CD8-positive, alpha-beta T cell (primary cell): ENCODE measurements at regions of chr1 and their contacts with region 1.

Region 1: GRCh38 chr1:99996951-99997350 is 27.2 kb downstream of the SLC35A3 start:
- DNase-seq: no peak
- ATAC-seq: no peak
- H3K4me3 ChIP-seq: no peak overlapping the region
- H3K4me3 Mint-ChIP-seq: no peak overlapping the region
- H3K27ac ChIP-seq: no peak overlapping the region
- H3K27ac Mint-ChIP-seq: no peak overlapping the region
- H3K4me1 ChIP-seq: no peaks in the 10 kb centered on the region
- H3K4me1 Mint-ChIP-seq: peaks cover 11% of the 10 kb centered on the region
- H3K27me3 ChIP-seq: no peaks in the 10 kb centered on the region
- H3K27me3 Mint-ChIP-seq: no peaks in the 10 kb centered on the region
- CTCF ChIP-seq: no peak

Region 2: DNA sequence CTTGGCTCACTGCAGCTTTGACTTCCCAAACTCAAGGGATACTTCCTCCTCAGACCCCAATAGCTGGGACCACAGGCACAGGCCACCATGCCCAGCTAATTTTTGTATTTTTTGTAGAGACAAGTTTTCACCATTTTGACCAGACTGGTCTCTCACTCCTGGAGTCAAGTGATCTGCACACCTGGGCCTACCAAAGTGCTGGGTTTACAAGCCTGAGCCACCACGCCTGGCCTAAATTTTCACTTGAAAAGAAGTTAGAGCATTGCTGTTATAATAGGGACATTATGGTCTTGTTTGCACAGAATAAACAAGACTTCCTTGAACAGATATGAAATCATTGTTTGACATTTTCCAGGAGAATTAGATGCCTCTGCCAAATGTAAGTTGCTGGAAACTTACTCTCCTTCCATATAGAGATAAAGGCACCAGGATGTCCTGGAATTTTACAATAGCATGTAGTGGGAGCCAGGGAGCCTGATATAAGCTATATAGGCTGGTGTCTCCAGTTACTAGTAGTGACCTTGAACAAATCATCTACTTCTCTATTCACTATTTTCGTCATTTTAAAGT is 10.2 kb before region 1 on chr1:
- CTCF ChIA-PET with region 1: no interaction called
- POLR2A ChIA-PET with region 1: no interaction called
- intact Hi-C with region 1: loop called in 1 of 2 experiments (anchors 1 kb)
- DNase-seq: no peak
- ATAC-seq: no peak
- H3K4me3 ChIP-seq: no peak overlapping the region
- H3K4me3 Mint-ChIP-seq: no peak overlapping the region
- H3K27ac ChIP-seq: no peak overlapping the region
- H3K27ac Mint-ChIP-seq: no peak overlapping the region
- H3K4me1 ChIP-seq: no peaks in the 10 kb centered on the region
- H3K4me1 Mint-ChIP-seq: peaks cover 19% of the 10 kb centered on the region
- H3K27me3 ChIP-seq: no peaks in the 10 kb centered on the region
- H3K27me3 Mint-ChIP-seq: no peaks in the 10 kb centered on the region
- CTCF ChIP-seq: no peak

Region 3: GRCh38 chr1:100037927-100038659 is 41.1 kb after region 1 on chr1:
- CTCF ChIA-PET with region 1: no interaction called
- POLR2A ChIA-PET with region 1: no interaction called
- intact Hi-C with region 1: no loop called
- DNase-seq: peak; percentile 77 to 95 (median 87)
- ATAC-seq: peak; percentile 78
- H3K4me3 ChIP-seq: peak overlapping the region; percentile 85 to 94
- H3K4me3 Mint-ChIP-seq: peak overlapping the region; percentile 97
- H3K27ac ChIP-seq: peak overlapping the region; percentile 94 to 99
- H3K27ac Mint-ChIP-seq: peak overlapping the region; percentile 98
- H3K4me1 ChIP-seq: peaks cover 43% of the 10 kb centered on the region
- H3K4me1 Mint-ChIP-seq: peaks cover 52% of the 10 kb centered on the region
- H3K27me3 ChIP-seq: no peaks in the 10 kb centered on the region
- H3K27me3 Mint-ChIP-seq: no peaks in the 10 kb centered on the region
- CTCF ChIP-seq: no peak

Region 4: DNA sequence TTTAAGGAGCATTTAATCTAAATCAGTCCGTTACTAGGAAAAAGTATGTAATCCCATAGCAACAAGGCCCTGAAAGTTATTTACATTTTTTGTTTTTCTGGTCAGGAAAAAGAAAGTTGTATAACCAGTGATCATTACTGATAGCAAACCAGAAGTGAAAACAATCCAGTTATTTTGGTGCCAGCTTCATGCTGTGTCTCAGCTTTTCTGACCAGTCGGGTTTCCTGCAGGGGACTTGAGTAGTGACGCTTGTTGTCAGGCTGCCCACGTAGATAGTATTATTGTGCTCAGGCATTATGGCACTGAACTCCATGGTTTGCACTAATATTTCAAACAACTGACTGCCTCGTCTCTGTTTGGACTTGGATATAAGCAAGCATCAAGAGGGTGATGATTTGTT is 80.6 kb after region 1 on chr1:
- CTCF ChIA-PET with region 1: no interaction called
- POLR2A ChIA-PET with region 1: no interaction called
- intact Hi-C with region 1: no loop called
- DNase-seq: no peak
- ATAC-seq: no peak
- H3K4me3 ChIP-seq: no peak overlapping the region
- H3K4me3 Mint-ChIP-seq: no peak overlapping the region
- H3K27ac ChIP-seq: no peak overlapping the region
- H3K27ac Mint-ChIP-seq: no peak overlapping the region
- H3K4me1 ChIP-seq: no peaks in the 10 kb centered on the region
- H3K4me1 Mint-ChIP-seq: peaks cover 2% of the 10 kb centered on the region
- H3K27me3 ChIP-seq: no peaks in the 10 kb centered on the region
- H3K27me3 Mint-ChIP-seq: no peaks in the 10 kb centered on the region
- CTCF ChIP-seq: no peak